Activated naive CD4-positive, alpha-beta T cell treated with anti-CD3 and anti-CD28 coated beads, Interleukin-2, amount 10 ng/mL, durations not matched to agents 7 days and 5 days (primary cell): ENCODE measurements at regions of chr14 and their contacts with region 1.

Region 1: DNA sequence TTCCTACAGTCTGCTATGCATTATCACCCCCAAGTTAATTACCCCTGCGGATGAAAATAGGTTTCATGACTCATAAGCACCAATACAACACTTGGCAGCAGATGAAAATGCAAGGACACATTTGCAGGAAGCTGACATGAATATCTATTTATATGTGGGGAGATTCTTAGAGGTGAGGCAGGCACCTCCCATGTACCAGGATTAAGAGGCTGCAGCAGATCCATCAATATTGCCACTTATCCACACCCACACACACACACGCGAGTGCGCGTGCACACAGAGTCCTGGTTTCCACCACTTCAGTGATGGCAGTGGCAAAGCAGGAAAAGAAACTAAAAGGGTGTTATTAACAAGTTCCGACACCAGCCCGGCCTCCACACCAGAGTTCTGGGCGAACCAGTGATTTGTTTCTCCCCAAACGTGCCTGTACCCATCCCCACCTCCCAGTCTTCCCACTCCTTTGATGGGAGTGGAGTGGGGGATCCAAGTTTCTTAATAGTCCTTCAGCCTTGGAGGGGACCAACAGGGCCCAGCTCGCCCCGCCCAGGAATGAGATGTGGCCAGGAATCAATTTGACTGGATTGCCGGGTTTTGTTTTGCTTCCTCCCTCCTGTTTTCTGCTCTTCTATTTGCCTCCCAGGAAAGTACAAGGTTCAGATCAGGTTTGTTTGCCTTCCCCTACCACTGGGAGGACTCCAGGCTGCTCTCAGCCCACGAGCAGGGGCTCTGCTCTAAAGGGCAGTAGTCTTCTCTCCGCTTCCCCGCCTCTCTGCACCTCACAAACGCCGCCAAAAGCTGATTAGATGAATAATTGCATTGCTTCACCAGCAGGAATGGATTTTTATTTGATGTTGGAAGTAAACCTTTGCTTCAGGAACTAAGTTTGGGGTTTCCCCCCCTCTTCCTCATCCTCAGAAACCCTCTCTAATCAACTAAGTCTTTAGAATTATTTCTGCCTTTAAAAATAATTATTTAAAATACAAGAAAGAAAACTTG is 5.2 kb downstream of the IRF2BPL start:
- DNase-seq: no peak
- H3K4me3 Mint-ChIP-seq: peak overlapping the region; percentile 2
- H3K27ac Mint-ChIP-seq: peak overlapping the region; percentile 77
- H3K4me1 Mint-ChIP-seq: peaks cover 52% of the 10 kb centered on the region
- H3K27me3 Mint-ChIP-seq: peaks cover 4% of the 10 kb centered on the region

Region 2: GRCh38 chr14:76701981-76702380 is 321.3 kb before region 1 on chr14:
- CTCF ChIA-PET with region 1: no interaction called
- DNase-seq: no peak
- H3K4me3 Mint-ChIP-seq: no peak overlapping the region
- H3K27ac Mint-ChIP-seq: no peak overlapping the region
- H3K4me1 Mint-ChIP-seq: no peaks in the 10 kb centered on the region
- H3K27me3 Mint-ChIP-seq: peaks cover 6% of the 10 kb centered on the region

Region 3: GRCh38 chr14:76962303-76962660 is 61.0 kb before region 1 on chr14:
- CTCF ChIA-PET with region 1: interaction called, 15 read pairs
- DNase-seq: no peak
- H3K4me3 Mint-ChIP-seq: peak overlapping the region; percentile 69
- H3K27ac Mint-ChIP-seq: peak overlapping the region; percentile 96
- H3K4me1 Mint-ChIP-seq: peaks cover 90% of the 10 kb centered on the region
- H3K27me3 Mint-ChIP-seq: peaks cover 27% of the 10 kb centered on the region

Region 4: GRCh38 chr14:77158175-77158891 is 135.0 kb after region 1 on chr14:
- CTCF ChIA-PET with region 1: no interaction called
- DNase-seq: no peak
- H3K4me3 Mint-ChIP-seq: no peak overlapping the region
- H3K27ac Mint-ChIP-seq: no peak overlapping the region
- H3K4me1 Mint-ChIP-seq: no peaks in the 10 kb centered on the region
- H3K27me3 Mint-ChIP-seq: peaks cover 56% of the 10 kb centered on the region

Region 5: DNA sequence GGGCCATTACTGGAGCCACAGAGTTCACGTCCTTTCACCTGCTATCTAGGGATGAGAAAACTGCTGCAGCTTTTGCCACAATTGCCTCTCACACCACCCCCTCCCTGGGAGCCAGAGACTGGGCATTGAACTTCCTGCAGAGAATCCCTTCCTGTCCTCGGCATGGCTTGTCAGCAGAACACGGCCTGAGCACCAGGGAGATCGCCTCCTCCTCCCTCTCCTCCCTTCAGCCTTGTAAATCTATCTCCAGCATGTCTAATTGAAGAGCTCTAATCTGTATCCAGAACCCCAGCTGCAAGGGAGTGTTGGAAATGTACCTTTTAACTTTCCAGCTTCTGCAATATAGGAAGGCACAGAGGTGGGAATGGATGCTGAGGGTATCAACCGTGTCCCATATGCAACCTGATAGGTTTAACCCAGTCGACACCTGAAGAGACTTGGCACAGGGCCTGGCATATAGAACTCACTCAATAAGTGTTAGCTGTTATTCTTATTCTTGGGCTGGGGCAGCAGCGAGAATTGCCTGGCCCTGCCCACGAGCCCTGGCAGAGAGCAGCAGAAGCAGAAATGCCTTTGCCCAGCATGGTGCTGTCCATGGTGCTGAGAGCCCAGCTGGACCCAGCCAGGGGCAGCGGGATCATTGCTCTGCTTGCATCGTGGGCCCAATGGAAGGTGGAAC is 185.1 kb after region 1 on chr14:
- CTCF ChIA-PET with region 1: no interaction called
- DNase-seq: peak; percentile 82
- H3K4me3 Mint-ChIP-seq: no peak overlapping the region
- H3K27ac Mint-ChIP-seq: no peak overlapping the region
- H3K4me1 Mint-ChIP-seq: no peaks in the 10 kb centered on the region
- H3K27me3 Mint-ChIP-seq: peaks cover 18% of the 10 kb centered on the region